Activated B cell treated with CpG ODN at 0.5 μM for 24 hours (primary cell): ENCODE measurements at regions of chr11 and their contacts with region 1.

Region 1: DNA sequence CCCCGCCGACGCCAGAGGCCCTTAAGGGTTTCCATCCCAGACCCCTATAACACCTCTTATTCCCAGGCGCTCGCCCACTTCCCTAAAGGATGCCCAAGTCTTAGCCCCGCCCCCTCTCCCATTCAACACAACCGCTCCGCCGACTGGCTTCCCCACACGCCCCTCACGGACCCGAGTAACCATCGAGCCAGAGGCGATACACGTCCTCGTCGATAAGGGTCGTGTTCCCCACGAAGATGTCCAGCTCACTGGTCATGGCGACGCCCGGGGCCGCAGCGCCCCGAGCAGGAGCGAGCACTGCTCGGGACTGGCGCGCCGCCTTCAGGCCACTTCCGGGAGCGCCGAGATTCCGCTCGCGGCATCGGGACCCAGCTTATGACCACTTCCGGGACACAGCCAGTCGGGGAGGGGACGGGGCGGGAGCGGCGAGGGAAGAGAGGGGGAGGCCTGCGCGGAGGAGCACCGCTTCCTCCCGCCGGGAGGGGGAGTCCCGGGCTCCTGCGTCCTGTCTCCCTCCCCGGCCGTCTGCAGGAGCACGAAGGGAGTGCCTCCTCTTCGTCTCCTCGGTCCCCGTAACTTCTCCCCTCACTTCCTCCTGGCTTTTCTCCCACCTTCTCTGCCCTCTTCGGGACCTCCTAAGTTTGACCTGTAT is at the start of gene FIBP:
- DNase-seq: peak; percentile 91
- ATAC-seq: peak; percentile 63
- H3K4me3 Mint-ChIP-seq: peak within 1 kb of the TSS; percentile 98
- H3K27ac Mint-ChIP-seq: peak within 1 kb of the TSS; percentile 95
- H3K4me1 Mint-ChIP-seq: peaks cover 70% of the 10 kb centered on the region
- H3K27me3 Mint-ChIP-seq: no peaks in the 10 kb centered on the region
- CTCF ChIP-seq: peak; percentile 23
- total RNA-seq, gene FIBP: 74.5 and 76.5 TPM in 2 replicates

Region 2: GRCh38 chr11:65615229-65615941 is 272.9 kb before region 1 on chr11 and contains the start of gene PCNX3:
- CTCF ChIA-PET with region 1: no interaction called
- POLR2A ChIA-PET with region 1: interaction called, 31 read pairs
- intact Hi-C with region 1: no loop called
- DNase-seq: peak; percentile 96
- ATAC-seq: peak; percentile 90
- H3K4me3 Mint-ChIP-seq: peak within 1 kb of the TSS; percentile 97
- H3K27ac Mint-ChIP-seq: peak within 1 kb of the TSS; percentile 96
- H3K4me1 Mint-ChIP-seq: peaks cover 58% of the 10 kb centered on the region
- H3K27me3 Mint-ChIP-seq: no peaks in the 10 kb centered on the region
- CTCF ChIP-seq: no peak
- total RNA-seq, gene PCNX3: 45.3 and 51.4 TPM in 2 replicates

Region 3: GRCh38 chr11:65873318-65874156 is 14.8 kb before region 1 on chr11:
- CTCF ChIA-PET with region 1: interaction called, 25 read pairs
- POLR2A ChIA-PET with region 1: interaction called, 34 read pairs
- intact Hi-C with region 1: loop called (anchors 2 kb)
- DNase-seq: peak; percentile 99
- ATAC-seq: peak; percentile 95
- H3K4me3 Mint-ChIP-seq: peak overlapping the region; percentile 90
- H3K27ac Mint-ChIP-seq: peak overlapping the region; percentile 88
- H3K4me1 Mint-ChIP-seq: peaks cover 20% of the 10 kb centered on the region
- H3K27me3 Mint-ChIP-seq: peaks cover 5% of the 10 kb centered on the region
- CTCF ChIP-seq: no peak

Region 4: GRCh38 chr11:65927904-65928397 is 39.7 kb after region 1 on chr11:
- CTCF ChIA-PET with region 1: interaction called, 9 read pairs
- POLR2A ChIA-PET with region 1: interaction called, 17 read pairs
- intact Hi-C with region 1: no loop called
- DNase-seq: peak; percentile 45
- ATAC-seq: peak; percentile 93
- H3K4me3 Mint-ChIP-seq: peak overlapping the region; percentile 79
- H3K27ac Mint-ChIP-seq: peak overlapping the region; percentile 93
- H3K4me1 Mint-ChIP-seq: peaks cover 22% of the 10 kb centered on the region
- H3K27me3 Mint-ChIP-seq: no peaks in the 10 kb centered on the region
- CTCF ChIP-seq: no peak

Region 5: DNA sequence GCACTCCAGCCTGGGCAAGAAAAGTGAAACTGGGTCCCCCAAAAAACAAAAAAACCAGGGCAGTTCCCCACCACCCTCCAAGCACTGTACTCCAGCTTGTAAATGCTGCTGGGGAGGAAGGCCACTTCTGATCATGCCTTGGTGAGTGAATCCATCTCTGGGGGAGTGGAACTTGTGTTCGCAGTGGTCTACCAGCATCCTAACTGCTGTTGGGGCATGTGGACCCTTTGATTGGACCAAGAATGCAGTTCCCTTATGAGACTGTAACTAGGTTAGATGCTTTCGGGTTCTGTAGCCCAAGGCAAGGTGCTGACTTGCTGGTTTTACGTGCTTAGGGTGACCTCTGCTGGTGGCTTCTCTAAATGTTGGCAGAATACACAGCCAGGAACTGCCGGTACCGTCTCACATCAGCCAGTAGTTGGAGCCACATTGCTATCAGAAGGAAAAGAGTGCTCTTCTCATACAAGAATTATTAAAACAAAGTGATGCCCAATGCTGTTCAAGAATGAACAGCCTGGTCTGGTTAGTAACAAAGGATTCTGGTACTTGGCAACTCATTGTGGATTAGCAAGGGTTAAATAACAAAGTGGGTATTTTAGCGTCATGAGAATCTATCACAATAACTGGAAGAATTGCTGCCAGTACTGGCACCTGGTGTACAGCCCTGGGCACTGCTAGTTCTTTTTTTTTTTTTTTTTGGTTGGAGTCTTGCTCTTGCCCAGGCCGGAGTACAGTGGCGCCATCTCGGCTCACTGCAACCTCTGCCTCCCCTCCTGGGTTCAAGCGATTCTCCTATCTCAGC is 100.7 kb after region 1 on chr11:
- CTCF ChIA-PET with region 1: interaction called, 67 read pairs
- POLR2A ChIA-PET with region 1: interaction called, 16 read pairs
- intact Hi-C with region 1: loop called (anchors 1 kb)
- DNase-seq: peak; percentile 67
- ATAC-seq: peak; percentile 99
- H3K4me3 Mint-ChIP-seq: no peak overlapping the region
- H3K27ac Mint-ChIP-seq: peak overlapping the region; percentile 62
- H3K4me1 Mint-ChIP-seq: peaks cover 5% of the 10 kb centered on the region
- H3K27me3 Mint-ChIP-seq: no peaks in the 10 kb centered on the region
- CTCF ChIP-seq: peak; percentile 75

Region 6: DNA sequence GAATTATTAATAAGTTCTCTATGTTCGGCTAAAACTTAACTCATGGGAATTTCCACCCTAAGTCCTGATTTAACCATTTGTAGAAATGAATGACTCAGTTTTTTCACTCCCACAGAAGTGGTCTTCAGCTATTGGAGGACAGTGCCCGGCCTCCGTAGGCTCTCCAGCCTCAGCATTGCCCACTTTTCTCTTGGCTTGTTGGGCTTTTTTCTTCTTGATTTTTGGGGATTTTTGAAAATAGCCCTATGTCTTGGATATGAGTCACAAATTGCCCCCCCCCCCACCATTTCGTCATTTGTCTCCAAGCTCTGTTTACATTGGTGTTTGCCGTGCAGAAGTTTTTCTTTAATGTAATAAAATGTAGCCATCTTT is 248.4 kb after region 1 on chr11:
- CTCF ChIA-PET with region 1: no interaction called
- POLR2A ChIA-PET with region 1: interaction called, 5 read pairs
- intact Hi-C with region 1: loop called (anchors 10 kb)
- DNase-seq: no peak
- ATAC-seq: no peak
- H3K4me3 Mint-ChIP-seq: no peak overlapping the region
- H3K27ac Mint-ChIP-seq: peak overlapping the region; percentile 47
- H3K4me1 Mint-ChIP-seq: peaks cover 84% of the 10 kb centered on the region
- H3K27me3 Mint-ChIP-seq: no peaks in the 10 kb centered on the region
- CTCF ChIP-seq: no peak

Region 7: DNA sequence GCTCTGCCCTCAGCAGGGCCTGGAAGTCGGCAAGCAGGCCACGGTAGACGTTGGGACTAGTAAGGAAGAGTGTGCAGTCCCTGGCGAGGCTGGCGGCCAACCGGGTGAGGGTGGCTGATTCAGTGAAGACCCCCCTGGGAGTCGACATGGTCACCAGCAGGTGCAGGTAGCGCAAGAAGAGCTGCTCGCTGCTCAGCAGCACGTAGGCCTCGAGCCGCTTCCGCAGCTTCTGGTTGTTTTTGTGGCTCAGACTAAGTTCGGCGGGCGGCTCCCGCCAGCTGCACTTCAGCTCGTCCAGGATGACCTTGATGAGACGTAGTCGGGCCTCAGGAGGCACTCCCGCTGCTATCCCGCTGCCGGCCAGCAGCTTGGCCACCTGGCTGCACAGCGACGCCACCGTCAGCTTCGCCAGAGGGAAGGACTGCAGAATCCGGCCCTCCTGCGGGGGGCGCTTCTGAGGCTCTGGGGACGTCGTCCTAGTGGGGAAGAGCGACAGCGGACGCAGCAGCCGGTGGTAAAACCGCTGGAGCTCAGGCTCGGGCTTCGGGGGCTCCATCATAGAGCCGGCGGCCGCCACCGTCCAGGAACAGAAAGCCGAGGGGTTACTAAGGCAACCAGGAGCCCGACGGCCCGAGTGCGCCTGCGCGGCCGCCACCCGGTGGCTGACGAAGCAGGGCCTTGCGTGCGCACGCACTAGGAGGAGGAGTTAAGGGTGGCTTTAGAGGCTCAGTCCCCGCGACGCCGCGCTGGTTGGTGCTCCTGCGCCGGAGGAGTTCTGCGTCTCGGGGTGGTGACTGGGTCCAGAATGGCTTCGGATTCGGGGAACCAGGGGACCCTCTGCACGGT is 704.4 kb after region 1 on chr11 and contains the starts of genes CCDC87 and CCS:
- CTCF ChIA-PET with region 1: no interaction called
- POLR2A ChIA-PET with region 1: interaction called, 12 read pairs
- intact Hi-C with region 1: no loop called
- DNase-seq: peak; percentile 98
- ATAC-seq: peak; percentile 97
- H3K4me3 Mint-ChIP-seq: peak within 1 kb of the TSS; percentile 100
- H3K27ac Mint-ChIP-seq: peak within 1 kb of the TSS; percentile 99
- H3K4me1 Mint-ChIP-seq: peaks cover 36% of the 10 kb centered on the region
- H3K27me3 Mint-ChIP-seq: no peaks in the 10 kb centered on the region
- CTCF ChIP-seq: no peak
- total RNA-seq, gene CCDC87: 0.22 and 0.31 TPM in 2 replicates
- total RNA-seq, gene CCS: 59.0 and 65.3 TPM in 2 replicates